ENCODE measurements at regions of chr17 and their contacts with region 1.

Region 1: GRCh38 chr17:4420692-4421131 is 13.0 kb upstream of the SPNS3 start:
- DNase-seq: peak; percentile 75
- H3K4me3 Mint-ChIP-seq: no peak overlapping the region
- H3K27ac Mint-ChIP-seq: no peak overlapping the region
- H3K4me1 Mint-ChIP-seq: no peaks in the 10 kb centered on the region
- H3K27me3 Mint-ChIP-seq: no peaks in the 10 kb centered on the region
- CTCF ChIP-seq: peak; percentile 80

Region 2: GRCh38 chr17:4480929-4481898 is 60.5 kb after region 1 on chr17:
- CTCF ChIA-PET with region 1: no interaction called
- POLR2A ChIA-PET with region 1: no interaction called
- intact Hi-C with region 1: no loop called
- DNase-seq: no peak
- H3K4me3 Mint-ChIP-seq: no peak overlapping the region
- H3K27ac Mint-ChIP-seq: no peak overlapping the region
- H3K4me1 Mint-ChIP-seq: peaks cover 9% of the 10 kb centered on the region
- H3K27me3 Mint-ChIP-seq: no peaks in the 10 kb centered on the region
- CTCF ChIP-seq: no peak

Region 3: DNA sequence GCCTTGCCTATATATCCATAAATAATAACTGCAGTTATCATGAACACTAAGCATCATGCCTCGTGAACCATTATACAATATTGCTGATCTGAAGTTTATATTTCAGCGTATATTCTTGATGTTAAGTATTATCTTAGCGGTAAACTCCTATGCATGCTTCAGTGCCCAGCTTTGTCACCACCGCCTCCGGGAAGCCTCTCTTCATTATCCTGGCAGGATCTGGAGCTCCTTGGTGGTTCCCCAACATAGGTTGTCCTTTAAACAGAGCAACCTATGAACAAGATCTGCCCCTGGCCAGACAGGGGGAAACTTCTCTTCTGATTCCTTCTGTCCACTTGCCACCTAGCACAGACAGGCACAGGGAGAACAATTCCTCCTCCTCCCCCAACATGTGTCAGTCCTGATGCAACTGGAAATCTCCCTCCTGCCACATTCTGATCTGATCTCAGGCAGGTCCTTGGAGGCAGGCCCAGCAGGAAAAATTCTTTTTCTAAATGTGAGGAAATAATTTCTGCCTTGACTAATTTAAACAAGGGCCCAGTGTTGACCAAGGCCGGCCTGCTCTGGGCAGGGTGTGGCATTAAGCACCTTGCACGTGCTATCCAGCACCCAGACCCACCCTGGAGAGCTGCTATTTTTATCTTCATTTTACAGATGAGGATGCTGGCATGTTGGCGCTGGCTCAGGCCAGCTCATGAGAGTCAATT is 100.3 kb after region 1 on chr17:
- CTCF ChIA-PET with region 1: interaction called, 8 read pairs
- POLR2A ChIA-PET with region 1: interaction called, 3 read pairs
- intact Hi-C with region 1: loop called (anchors 5 kb)
- DNase-seq: peak; percentile 73
- H3K4me3 Mint-ChIP-seq: no peak overlapping the region
- H3K27ac Mint-ChIP-seq: peak overlapping the region; percentile 69
- H3K4me1 Mint-ChIP-seq: peaks cover 12% of the 10 kb centered on the region
- H3K27me3 Mint-ChIP-seq: no peaks in the 10 kb centered on the region
- CTCF ChIP-seq: no peak

Region 4: DNA sequence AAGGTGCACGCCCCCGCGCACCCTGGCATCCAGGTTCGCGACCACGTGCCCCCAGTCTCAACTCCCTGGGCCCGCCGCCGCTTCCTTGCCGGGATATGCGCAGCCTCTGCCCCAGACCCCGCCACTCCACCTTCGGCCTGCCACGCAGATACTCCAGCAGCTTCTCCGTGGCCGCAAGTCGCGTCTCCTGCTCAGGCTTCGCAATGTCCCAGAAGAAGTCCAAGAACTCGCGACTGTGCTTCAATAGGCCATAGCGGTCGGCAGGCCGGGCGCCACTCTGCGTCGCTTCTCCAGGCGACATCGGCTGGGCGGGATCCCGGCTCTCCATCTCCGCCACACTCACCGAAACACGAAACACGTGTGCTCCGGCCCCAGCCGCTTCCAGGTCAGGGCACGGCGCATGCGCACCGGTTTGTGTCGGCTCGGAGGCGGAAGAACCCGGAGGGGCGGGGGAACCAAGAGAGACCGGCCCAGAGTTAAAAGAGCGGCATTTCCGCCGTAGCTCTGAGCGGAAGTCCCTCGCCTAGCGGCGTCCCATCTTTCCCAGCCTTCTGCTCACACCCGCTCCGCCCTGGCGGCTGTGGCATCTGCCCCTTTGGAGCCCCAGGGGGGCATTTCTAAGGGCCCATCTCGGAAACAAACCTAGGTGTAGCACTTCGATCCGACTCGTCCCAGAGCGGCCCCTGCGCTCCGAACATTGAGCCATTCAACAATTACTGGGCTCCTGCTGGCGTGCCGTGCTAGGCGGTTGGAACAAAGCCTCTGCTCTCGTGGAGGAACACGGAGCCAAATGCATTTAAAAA is 134.5 kb after region 1 on chr17 and contains the start of gene MYBBP1A:
- CTCF ChIA-PET with region 1: interaction called, 10 read pairs
- POLR2A ChIA-PET with region 1: no interaction called
- intact Hi-C with region 1: no loop called
- DNase-seq: peak; percentile 95
- H3K4me3 Mint-ChIP-seq: peak within 1 kb of the TSS; percentile 80
- H3K27ac Mint-ChIP-seq: peak within 1 kb of the TSS; percentile 75
- H3K4me1 Mint-ChIP-seq: peaks cover 9% of the 10 kb centered on the region
- H3K27me3 Mint-ChIP-seq: no peaks in the 10 kb centered on the region
- CTCF ChIP-seq: no peak
- total RNA-seq, gene MYBBP1A: 78.3 and 123 TPM in 2 replicates

Region 5: GRCh38 chr17:4625181-4625617 is 204.5 kb after region 1 on chr17:
- CTCF ChIA-PET with region 1: interaction called, 23 read pairs
- POLR2A ChIA-PET with region 1: no interaction called
- intact Hi-C with region 1: loop called (anchors 1 kb)
- DNase-seq: no peak
- H3K4me3 Mint-ChIP-seq: no peak overlapping the region
- H3K27ac Mint-ChIP-seq: no peak overlapping the region
- H3K4me1 Mint-ChIP-seq: no peaks in the 10 kb centered on the region
- H3K27me3 Mint-ChIP-seq: no peaks in the 10 kb centered on the region
- CTCF ChIP-seq: no peak